ENCODE measurements at regions of chr3 and their contacts with region 1.

Region 1: GRCh38 chr3:194769020-194769643 is 83.4 kb downstream of the FAM43A start:
- DNase-seq: peak; percentile 97
- ATAC-seq: peak; percentile 87
- H3K4me3 ChIP-seq: peak overlapping the region; percentile 65
- H3K27ac ChIP-seq: no peak overlapping the region
- H3K4me1 ChIP-seq: peaks cover 37% of the 10 kb centered on the region
- H3K27me3 ChIP-seq: no peaks in the 10 kb centered on the region
- CTCF ChIP-seq: no peak

Region 2: GRCh38 chr3:194740859-194741491 is 28.2 kb before region 1 on chr3:
- CTCF ChIA-PET with region 1: interaction called, 3 read pairs
- POLR2A ChIA-PET with region 1: interaction called, 4 read pairs
- intact Hi-C with region 1: loop called (anchors 2 kb)
- DNase-seq: peak; percentile 96
- ATAC-seq: peak; percentile 78
- H3K4me3 ChIP-seq: peak overlapping the region; percentile 35; the same call in 1 of the 2 replicates
- H3K27ac ChIP-seq: peak overlapping the region; percentile 82
- H3K4me1 ChIP-seq: peaks cover 46% of the 10 kb centered on the region
- H3K27me3 ChIP-seq: no peaks in the 10 kb centered on the region
- CTCF ChIP-seq: no peak

Region 3: DNA sequence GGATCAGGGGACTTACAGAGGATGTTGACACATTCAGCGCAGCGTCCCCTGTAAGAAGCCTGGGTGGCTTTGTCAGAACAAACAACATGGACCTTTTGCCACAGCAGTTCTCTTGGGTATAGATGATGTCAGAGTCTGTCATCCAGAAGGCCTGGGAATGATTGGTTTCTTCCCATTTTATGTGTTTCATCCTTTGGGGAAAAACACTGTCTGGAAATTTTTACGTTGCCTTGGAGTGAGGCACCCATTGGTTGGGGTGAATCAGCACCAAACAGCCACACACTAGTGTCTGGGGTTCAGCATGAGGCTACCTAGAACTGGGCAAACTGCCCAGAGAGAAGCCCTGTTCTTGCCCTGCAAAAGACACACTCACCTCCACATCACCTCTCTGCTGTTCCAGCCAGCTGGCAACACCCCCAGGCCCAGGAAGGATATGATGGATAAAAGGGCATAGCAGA is 39.5 kb after region 1 on chr3:
- CTCF ChIA-PET with region 1: no interaction called
- POLR2A ChIA-PET with region 1: no interaction called
- intact Hi-C with region 1: loop called (anchors 5 kb)
- DNase-seq: peak; percentile 72
- ATAC-seq: peak; percentile 77
- H3K4me3 ChIP-seq: no peak overlapping the region
- H3K27ac ChIP-seq: peak overlapping the region; percentile 14
- H3K4me1 ChIP-seq: peaks cover 10% of the 10 kb centered on the region
- H3K27me3 ChIP-seq: no peaks in the 10 kb centered on the region
- CTCF ChIP-seq: no peak

Region 4: GRCh38 chr3:194930377-194931204 is 161.5 kb after region 1 on chr3:
- CTCF ChIA-PET with region 1: no interaction called
- POLR2A ChIA-PET with region 1: no interaction called
- intact Hi-C with region 1: no loop called
- DNase-seq: peak; percentile 68
- ATAC-seq: peak; percentile 93
- H3K4me3 ChIP-seq: no peak overlapping the region
- H3K27ac ChIP-seq: peak overlapping the region; percentile 28
- H3K4me1 ChIP-seq: peaks cover 29% of the 10 kb centered on the region
- H3K27me3 ChIP-seq: no peaks in the 10 kb centered on the region
- CTCF ChIP-seq: no peak

Region 5: GRCh38 chr3:194985031-194985578 is 216.0 kb after region 1 on chr3:
- CTCF ChIA-PET with region 1: interaction called, 5 read pairs
- POLR2A ChIA-PET with region 1: interaction called, 4 read pairs
- intact Hi-C with region 1: loop called (anchors 5 kb)
- DNase-seq: peak; percentile 86
- ATAC-seq: peak; percentile 84
- H3K4me3 ChIP-seq: peak overlapping the region; percentile 51; the same call in 1 of the 2 replicates
- H3K27ac ChIP-seq: peak overlapping the region; percentile 10; the same call in 1 of the 2 replicates
- H3K4me1 ChIP-seq: peaks cover 43% of the 10 kb centered on the region
- H3K27me3 ChIP-seq: no peaks in the 10 kb centered on the region
- CTCF ChIP-seq: peak; percentile 68

Region 6: GRCh38 chr3:195106418-195106906 is 337.3 kb after region 1 on chr3:
- CTCF ChIA-PET with region 1: no interaction called
- POLR2A ChIA-PET with region 1: no interaction called
- intact Hi-C with region 1: loop called (anchors 10 kb)
- DNase-seq: peak; percentile 69
- ATAC-seq: peak; percentile 49
- H3K4me3 ChIP-seq: peak overlapping the region; percentile 34; the same call in 1 of the 2 replicates
- H3K27ac ChIP-seq: peak overlapping the region; percentile 88
- H3K4me1 ChIP-seq: peaks cover 50% of the 10 kb centered on the region
- H3K27me3 ChIP-seq: no peaks in the 10 kb centered on the region
- CTCF ChIP-seq: peak; percentile 98

Measured in PC-3 (cell line).